ENCODE measurements at regions of chr1 and their contacts with region 1.

Region 1: DNA sequence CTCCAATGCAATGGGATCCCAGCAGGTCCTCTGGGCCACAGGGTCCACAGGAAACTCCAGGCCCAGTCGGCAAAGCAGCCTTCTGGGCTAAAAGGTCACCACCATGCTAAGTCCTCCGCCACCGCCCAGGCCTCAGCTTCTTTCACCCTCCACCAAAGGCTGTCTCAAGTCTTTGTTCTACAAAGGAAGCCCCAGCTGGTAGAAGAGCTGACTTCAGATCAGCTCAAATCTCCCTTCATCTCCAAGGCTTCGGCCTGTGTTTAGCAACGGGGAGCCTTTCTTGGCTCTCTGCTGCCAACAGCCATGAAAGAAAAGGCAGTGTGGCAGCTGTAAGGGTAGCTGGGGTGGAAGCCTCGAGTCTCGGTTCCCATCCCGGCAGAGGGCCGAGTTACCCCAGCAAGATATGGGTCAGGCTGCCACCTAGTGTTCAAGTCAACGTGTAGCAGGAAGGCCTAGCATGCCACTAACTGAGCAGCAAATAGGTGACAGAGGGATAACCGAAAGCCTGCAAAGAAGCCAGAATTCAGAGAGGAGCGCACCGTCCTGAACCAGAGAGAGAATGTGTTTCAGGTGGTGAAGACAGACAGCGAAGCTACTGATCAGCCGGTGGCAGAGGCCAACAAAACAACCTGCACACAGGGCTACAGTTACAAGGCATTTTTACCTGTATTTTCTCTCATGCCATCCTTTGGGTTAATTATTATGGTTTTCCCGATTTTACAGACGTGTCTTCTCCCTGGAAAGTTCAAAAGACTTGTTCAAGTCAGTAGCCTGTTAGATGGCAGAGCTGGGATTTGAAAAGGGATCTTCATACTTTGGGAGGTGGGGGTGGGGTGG is 26.8 kb upstream of the CRNN start:
- DNase-seq: peak; percentile 84
- H3K4me3 Mint-ChIP-seq: no peak overlapping the region
- H3K27ac Mint-ChIP-seq: no peak overlapping the region
- H3K4me1 Mint-ChIP-seq: no peaks in the 10 kb centered on the region
- H3K27me3 Mint-ChIP-seq: peaks cover 91% of the 10 kb centered on the region
- CTCF ChIP-seq: peak; percentile 92

Region 2: DNA sequence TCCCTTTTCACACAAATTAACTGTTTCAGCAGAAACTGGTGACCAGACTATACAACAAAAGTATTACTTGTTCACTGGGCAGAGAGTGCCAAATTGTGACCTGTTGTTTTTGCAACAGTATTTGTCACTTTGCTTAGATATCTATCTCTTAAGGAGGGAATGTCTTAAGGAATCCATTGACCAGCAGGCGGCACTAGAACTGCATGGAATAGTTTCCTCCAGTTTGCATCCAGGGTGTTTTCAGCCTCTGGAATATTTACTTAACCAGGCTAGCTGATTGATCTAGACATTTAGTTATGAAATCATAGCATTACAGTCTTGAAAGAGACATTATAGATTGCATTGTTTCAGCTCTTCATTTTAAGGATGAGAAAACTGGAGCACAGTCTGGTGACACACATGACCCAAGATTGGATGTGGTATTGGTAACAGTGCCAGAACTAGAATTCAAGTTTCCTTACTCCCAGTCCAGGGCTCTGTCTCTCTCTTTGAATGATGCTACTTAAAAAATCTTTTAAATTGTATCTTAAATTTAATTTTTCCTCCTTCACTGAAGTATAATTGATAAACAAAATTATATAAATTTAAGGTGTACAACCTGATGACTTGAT is 298.8 kb before region 1 on chr1:
- CTCF ChIA-PET with region 1: no interaction called
- intact Hi-C with region 1: loop called (anchors 5 kb)
- DNase-seq: peak; percentile 69
- H3K4me3 Mint-ChIP-seq: no peak overlapping the region
- H3K27ac Mint-ChIP-seq: no peak overlapping the region
- H3K4me1 Mint-ChIP-seq: no peaks in the 10 kb centered on the region
- H3K27me3 Mint-ChIP-seq: peaks cover 78% of the 10 kb centered on the region
- CTCF ChIP-seq: peak; percentile 80

Region 3: GRCh38 chr1:152398812-152399698 is 41.8 kb before region 1 on chr1:
- CTCF ChIA-PET with region 1: interaction called, 38 read pairs
- intact Hi-C with region 1: loop called (anchors 1 kb)
- DNase-seq: peak; percentile 58
- H3K4me3 Mint-ChIP-seq: no peak overlapping the region
- H3K27ac Mint-ChIP-seq: no peak overlapping the region
- H3K4me1 Mint-ChIP-seq: no peaks in the 10 kb centered on the region
- H3K27me3 Mint-ChIP-seq: peaks cover 79% of the 10 kb centered on the region
- CTCF ChIP-seq: peak; percentile 65

Region 4: DNA sequence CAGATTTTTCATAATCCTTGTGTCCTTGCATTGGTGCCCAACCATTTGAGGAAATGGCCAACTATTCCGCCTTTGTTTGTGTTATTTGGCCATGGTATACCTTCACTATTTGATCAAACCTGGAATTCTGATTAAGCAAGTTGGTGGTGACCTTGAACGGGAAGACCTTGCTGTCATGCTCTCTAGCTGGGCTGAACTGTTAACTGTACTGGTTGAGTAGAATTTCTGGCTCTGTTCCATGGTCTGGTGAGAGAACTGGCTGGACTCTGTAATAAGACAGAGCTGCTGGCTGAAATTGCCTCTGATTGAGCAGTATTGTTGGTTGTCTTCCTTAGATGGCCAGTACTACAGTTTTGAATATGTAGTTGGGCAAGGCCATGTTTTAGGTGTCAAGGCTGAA is 156.1 kb after region 1 on chr1:
- CTCF ChIA-PET with region 1: no interaction called
- intact Hi-C with region 1: no loop called
- DNase-seq: no peak
- H3K4me3 Mint-ChIP-seq: no peak overlapping the region
- H3K27ac Mint-ChIP-seq: no peak overlapping the region
- H3K4me1 Mint-ChIP-seq: no peaks in the 10 kb centered on the region
- H3K27me3 Mint-ChIP-seq: peaks cover 70% of the 10 kb centered on the region
- CTCF ChIP-seq: no peak

Measured in Calu3 (cell line).